ACHN (cell line): ENCODE measurements at regions of chr7 and their contacts with region 1.

Region 1: GRCh38 chr7:114405427-114405826 is 9.2 kb upstream of the FOXP2 start:
- DNase-seq: peak; percentile 69

Region 2: DNA sequence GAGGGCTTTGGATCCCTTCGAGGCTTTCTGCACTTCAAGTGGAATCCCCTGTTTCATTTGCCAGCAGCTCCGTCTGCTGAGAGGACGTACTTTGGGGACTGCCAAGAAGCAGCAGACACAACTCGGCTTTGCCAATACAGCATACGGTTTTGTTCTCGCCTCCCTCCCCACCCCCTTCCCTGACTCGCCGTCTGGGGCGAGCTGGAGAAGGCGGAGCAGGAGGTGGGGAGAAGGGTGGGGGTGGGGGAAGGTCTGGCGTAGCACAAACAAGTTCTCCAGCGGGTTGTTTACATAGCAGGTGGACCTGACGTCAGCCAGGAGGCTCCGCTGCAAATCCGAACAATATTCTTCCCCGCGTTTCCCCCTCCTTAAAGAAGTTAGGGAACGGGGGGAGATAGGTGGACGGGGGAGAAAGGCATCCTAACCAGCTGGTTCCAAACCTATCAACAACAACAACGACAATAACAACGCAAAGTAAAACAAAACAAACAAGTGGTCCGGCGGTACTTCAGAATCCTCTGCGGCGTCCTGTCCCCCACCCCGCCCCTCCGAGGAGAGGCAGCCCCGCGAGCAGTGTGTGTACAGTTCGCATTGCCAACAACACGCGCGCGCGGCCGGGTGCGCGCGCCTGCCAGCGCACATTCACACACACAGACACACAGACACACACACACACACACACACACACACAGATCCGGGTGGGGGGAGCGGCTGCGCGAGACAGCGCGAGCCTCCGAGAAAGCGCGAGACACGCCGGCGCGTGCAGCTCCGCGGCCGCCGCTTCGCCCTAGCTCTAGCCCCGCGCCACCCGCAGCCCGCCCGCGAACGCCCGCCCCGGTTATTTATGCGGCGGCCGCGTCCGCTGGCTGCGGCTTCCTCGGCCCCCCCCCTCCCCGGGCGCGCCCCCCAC is 319.6 kb before region 1 on chr7:
- in situ Hi-C with region 1: loop called (anchors 25 kb)
- DNase-seq: peak; percentile 93

Region 3: DNA sequence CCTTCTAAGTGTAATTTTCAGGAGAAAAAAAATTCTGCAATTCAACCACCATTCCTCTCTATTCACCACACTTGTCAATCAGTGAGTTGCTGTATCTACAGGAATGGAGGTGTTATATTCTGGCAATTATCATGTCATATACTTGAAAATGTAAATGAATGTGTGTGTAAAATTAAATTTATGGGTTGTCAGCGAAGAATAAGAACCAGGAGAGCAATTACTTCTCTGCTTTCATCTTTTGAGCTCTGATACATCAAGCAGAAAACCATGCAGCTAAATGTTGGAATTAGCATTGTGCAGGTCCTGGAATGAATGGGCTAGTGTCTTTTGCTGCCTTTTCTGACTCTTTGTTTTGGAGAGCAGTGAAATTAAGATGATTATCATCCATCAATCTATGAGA is 216.8 kb after region 1 on chr7:
- in situ Hi-C with region 1: no loop called
- DNase-seq: no peak

Region 4: DNA sequence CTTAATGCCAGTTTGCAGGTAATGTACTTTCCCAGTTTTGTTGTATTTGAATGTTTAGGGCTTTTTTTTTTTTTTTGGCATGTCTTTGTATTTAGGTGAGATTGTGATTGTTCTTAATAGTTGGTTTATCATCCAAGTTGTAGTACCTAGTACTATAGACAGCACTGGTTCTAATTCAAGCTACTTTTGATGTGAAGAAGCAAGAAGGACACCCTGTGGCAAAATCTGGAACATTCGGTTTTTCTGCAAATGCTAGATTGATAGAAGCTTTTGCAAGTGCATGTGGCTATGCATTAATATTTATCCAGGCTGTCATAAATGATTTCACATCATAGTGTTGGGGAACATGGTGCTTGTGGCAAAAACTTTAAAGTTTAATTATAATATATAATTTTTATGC is 258.1 kb after region 1 on chr7:
- in situ Hi-C with region 1: loop called (anchors 25 kb)
- DNase-seq: peak; percentile 80